Naive thymus-derived CD4-positive, alpha-beta T cell (primary cell): ENCODE measurements at regions of chr19 and their contacts with region 1.

Region 1: GRCh38 chr19:35693830-35694599 is 10.3 kb upstream of the ZBTB32 start:
- DNase-seq: peak; percentile 75 to 93 (median 86)
- ATAC-seq: peak; percentile 100
- H3K4me3 ChIP-seq: no peak overlapping the region
- H3K4me3 Mint-ChIP-seq: no peak overlapping the region
- H3K27ac ChIP-seq: no peak overlapping the region
- H3K27ac Mint-ChIP-seq: peak overlapping the region in 4 of 9 donors; percentile 6 to 62 (median 40)
- H3K4me1 ChIP-seq: no peaks in the 10 kb centered on the region
- H3K4me1 Mint-ChIP-seq: peaks cover 0 to 27% (median 0%) of the 10 kb centered on the region in 7 donors
- H3K27me3 ChIP-seq: no peaks in the 10 kb centered on the region
- H3K27me3 Mint-ChIP-seq: no peaks in the 10 kb centered on the region

Region 2: DNA sequence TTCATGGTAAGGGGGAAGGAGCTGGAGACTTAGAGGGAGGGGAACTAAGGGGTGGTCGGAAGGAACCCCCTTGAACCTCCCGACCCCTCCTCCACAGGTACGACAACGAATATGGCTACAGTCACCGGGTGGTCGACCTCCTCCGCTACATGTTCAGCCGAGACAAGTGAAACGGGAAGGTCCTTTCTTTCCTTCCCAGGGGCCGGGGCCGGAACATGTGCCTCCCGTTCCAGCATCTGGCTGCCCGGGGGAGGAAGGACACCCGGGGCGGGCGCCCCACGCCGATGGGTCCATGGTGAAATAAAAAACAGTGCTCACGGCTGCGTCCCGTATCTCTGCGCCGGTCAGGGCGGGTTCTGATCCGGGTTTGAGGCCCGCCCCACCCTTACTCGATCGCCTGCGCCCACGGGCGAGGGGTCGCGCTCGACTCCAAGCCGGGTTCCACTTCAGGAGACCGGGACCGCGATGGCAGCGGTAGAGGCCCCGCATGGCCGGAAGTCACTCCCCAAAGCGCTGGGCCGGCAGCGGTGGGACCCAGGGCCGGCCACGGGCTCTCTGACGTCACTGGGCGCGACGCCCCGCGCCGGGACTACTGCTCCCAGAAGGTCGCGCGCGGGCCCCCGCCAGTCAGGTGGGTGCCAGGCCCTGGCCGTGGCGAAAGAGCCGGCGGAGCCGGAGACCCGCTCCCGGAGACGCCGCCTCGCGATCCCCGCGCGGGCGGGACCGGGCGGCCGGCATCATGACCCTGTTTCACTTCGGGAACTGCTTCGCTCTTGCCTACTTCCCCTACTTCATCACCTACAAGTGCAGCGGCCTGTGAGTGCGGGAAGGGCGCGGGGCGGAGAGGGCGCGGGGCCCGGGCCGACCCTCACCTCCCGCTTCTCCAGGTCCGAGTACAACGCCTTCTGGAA is 148.8 kb before region 1 on chr19 and contains the start of gene TMEM147:
- CTCF ChIA-PET with region 1: interaction called, 3 read pairs
- POLR2A ChIA-PET with region 1: no interaction called
- intact Hi-C with region 1: loop called (anchors 5 kb)
- DNase-seq: peak; percentile 60 to 90 (median 69)
- ATAC-seq: peak; percentile 91
- H3K4me3 ChIP-seq: peak within 1 kb of the TSS; percentile 78
- H3K4me3 Mint-ChIP-seq: peak within 1 kb of the TSS; percentile 79 to 93 (median 89)
- H3K27ac ChIP-seq: peak within 1 kb of the TSS; percentile 84
- H3K27ac Mint-ChIP-seq: peak within 1 kb of the TSS; percentile 52 to 96 (median 90)
- H3K4me1 ChIP-seq: peaks cover 13 to 16% of the 10 kb centered on the region in 2 donors
- H3K4me1 Mint-ChIP-seq: peaks cover 27 to 41% (median 38%) of the 10 kb centered on the region in 7 donors
- H3K27me3 ChIP-seq: no peaks in the 10 kb centered on the region
- H3K27me3 Mint-ChIP-seq: no peaks in the 10 kb centered on the region
- total RNA-seq, gene TMEM147: 24.7 to 54.0 (median 34.6) TPM

Region 3: GRCh38 chr19:35757749-35758608 is 64.0 kb after region 1 on chr19 and contains the start of gene PROSER3:
- CTCF ChIA-PET with region 1: interaction called, 3 read pairs
- POLR2A ChIA-PET with region 1: no interaction called
- intact Hi-C with region 1: loop called in 1 of 2 experiments (anchors 1 kb)
- DNase-seq: peak; percentile 93 to 100 (median 99)
- ATAC-seq: peak; percentile 98
- H3K4me3 ChIP-seq: peak within 1 kb of the TSS; percentile 99
- H3K4me3 Mint-ChIP-seq: peak within 1 kb of the TSS; percentile 92 to 100 (median 96)
- H3K27ac ChIP-seq: peak within 1 kb of the TSS; percentile 92
- H3K27ac Mint-ChIP-seq: peak within 1 kb of the TSS; percentile 89 to 99 (median 95)
- H3K4me1 ChIP-seq: peaks cover 10 to 35% of the 10 kb centered on the region in 2 donors
- H3K4me1 Mint-ChIP-seq: peaks cover 13 to 42% (median 37%) of the 10 kb centered on the region in 7 donors
- H3K27me3 ChIP-seq: peaks cover 0 to 4% of the 10 kb centered on the region in 2 donors
- H3K27me3 Mint-ChIP-seq: peaks cover 0 to 12% (median 5%) of the 10 kb centered on the region in 5 donors
- total RNA-seq, gene PROSER3: 34.0 to 47.3 (median 39.7) TPM

Region 4: DNA sequence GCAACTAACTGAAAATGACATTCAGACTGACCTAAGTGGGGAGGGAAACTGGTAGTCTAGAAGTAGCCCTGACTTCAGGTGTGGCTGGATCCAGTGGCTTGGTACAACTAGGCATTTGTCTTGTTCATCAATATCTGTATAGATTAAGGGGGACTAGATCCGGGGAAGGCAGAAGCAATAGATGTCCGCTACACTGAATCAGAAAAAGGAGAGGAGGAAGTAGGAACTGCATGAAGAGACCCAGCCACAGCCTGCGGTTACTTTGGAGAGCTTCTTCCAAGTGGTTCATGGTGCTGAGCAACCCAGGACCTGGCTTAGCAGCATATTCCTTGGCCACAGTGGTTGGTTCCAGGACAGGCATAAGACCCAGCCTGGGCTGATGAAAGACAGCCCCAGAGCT is 128.6 kb after region 1 on chr19:
- CTCF ChIA-PET with region 1: interaction called, 12 read pairs
- POLR2A ChIA-PET with region 1: no interaction called
- intact Hi-C with region 1: loop called in 1 of 2 experiments (anchors 1 kb)
- DNase-seq: no peak
- ATAC-seq: no peak
- H3K4me3 ChIP-seq: no peak overlapping the region
- H3K4me3 Mint-ChIP-seq: no peak overlapping the region
- H3K27ac ChIP-seq: no peak overlapping the region
- H3K27ac Mint-ChIP-seq: peak overlapping the region in 1 of 9 donors; percentile 65
- H3K4me1 ChIP-seq: no peaks in the 10 kb centered on the region
- H3K4me1 Mint-ChIP-seq: peaks cover 0 to 3% (median 0%) of the 10 kb centered on the region in 7 donors
- H3K27me3 ChIP-seq: peaks cover 0 to 2% of the 10 kb centered on the region in 2 donors
- H3K27me3 Mint-ChIP-seq: peaks cover 14 to 34% (median 19%) of the 10 kb centered on the region in 5 donors

Region 5: DNA sequence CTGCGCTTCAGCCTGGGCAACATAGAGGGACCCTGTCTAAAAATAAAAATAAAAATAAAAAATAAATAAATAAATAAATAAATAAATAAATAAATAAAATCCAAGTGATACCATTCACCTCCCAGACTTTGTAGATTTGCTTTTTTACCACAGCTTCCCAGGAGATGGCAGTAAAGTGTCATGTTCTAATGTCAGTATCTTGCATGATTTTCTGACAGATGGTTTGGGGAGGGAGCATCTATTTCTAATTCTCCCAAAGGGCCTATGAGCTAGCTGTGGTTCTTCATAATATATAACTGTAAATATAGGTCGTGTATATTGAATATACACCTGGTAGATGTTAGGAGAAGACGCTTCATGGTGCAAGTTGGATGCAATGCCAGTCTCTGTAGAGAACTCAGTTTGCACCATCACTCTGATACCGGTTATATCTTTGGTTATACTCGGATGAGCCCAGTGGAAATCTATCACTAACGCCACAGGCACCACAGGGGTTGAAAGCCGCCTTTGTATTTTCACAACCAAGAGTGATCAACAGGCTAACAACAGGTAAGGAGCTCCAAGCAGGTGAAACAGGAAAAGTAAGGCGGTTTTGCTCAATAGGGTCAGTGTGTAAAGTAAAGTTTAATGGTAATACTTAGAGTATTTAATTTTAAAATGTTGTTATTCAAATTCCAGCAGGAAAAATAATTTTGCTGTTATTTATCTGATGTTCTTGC is 188.3 kb after region 1 on chr19:
- CTCF ChIA-PET with region 1: interaction called, 6 read pairs
- POLR2A ChIA-PET with region 1: interaction called, 9 read pairs
- intact Hi-C with region 1: loop called in 1 of 2 experiments (anchors 5 kb)
- DNase-seq: peak in 7 of 9 donors; percentile 53 to 75 (median 71)
- ATAC-seq: peak; percentile 66
- H3K4me3 ChIP-seq: no peak overlapping the region
- H3K4me3 Mint-ChIP-seq: no peak overlapping the region
- H3K27ac ChIP-seq: no peak overlapping the region
- H3K27ac Mint-ChIP-seq: peak overlapping the region in 4 of 9 donors; percentile 42 to 55 (median 50)
- H3K4me1 ChIP-seq: peaks cover 4 to 9% of the 10 kb centered on the region in 2 donors
- H3K4me1 Mint-ChIP-seq: peaks cover 8 to 17% (median 11%) of the 10 kb centered on the region in 7 donors
- H3K27me3 ChIP-seq: peaks cover 4 to 6% of the 10 kb centered on the region in 2 donors
- H3K27me3 Mint-ChIP-seq: peaks cover 12 to 20% (median 18%) of the 10 kb centered on the region in 5 donors